ENCODE measurements at regions of chr3 and their contacts with region 1.

Region 1: DNA sequence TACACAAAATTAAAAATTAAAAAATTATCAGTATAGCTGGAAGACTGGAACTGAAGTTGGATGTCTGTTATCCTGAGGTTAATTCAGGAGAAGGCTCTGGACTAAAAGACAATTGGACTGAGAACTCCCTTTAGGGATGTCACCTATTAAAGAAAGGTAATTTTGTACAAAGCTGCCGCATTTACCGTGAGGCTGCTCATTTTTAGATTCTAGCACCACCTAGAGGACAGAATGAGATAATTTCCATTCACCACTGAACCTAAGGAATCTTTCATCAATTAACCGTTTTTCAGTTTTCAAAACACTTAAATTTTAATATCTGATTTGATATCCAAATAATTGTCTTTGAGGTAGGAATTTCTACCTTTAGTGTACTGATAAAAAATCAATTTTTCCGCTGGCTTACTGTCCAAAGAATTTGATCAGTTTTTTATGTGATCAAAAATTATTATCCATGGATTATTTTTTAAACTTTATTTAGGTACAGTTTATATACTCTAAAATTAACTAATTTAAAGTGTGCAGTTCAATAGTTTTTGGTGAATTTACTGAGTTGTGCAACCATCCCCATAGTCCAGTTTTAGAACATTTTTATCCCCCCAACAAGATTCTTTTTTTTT is 106.7 kb upstream of the TNIK start:
- DNase-seq: peak in 4 of 5 donors; percentile 52 to 63 (median 59)
- H3K4me3 ChIP-seq: no peak overlapping the region
- H3K4me3 Mint-ChIP-seq: no peak overlapping the region
- H3K27ac ChIP-seq: no peak overlapping the region
- H3K27ac Mint-ChIP-seq: no peak overlapping the region
- H3K4me1 ChIP-seq: peaks cover 10% of the 10 kb centered on the region
- H3K4me1 Mint-ChIP-seq: peaks cover 3 to 7% (median 5%) of the 10 kb centered on the region in 4 donors
- H3K27me3 ChIP-seq: no peaks in the 10 kb centered on the region
- H3K27me3 Mint-ChIP-seq: peaks cover 2 to 3% of the 10 kb centered on the region in 2 donors

Region 2: GRCh38 chr3:171049861-171050444 is 517.0 kb before region 1 on chr3:
- CTCF ChIA-PET with region 1: interaction called, 12 read pairs
- POLR2A ChIA-PET with region 1: no interaction called
- intact Hi-C with region 1: loop called (anchors 1 kb)
- DNase-seq: peak in 4 of 5 donors; percentile 17 to 37 (median 23)
- H3K4me3 ChIP-seq: no peak overlapping the region
- H3K4me3 Mint-ChIP-seq: no peak overlapping the region
- H3K27ac ChIP-seq: no peak overlapping the region
- H3K27ac Mint-ChIP-seq: no peak overlapping the region
- H3K4me1 ChIP-seq: no peaks in the 10 kb centered on the region
- H3K4me1 Mint-ChIP-seq: peaks cover 0 to 4% (median 1%) of the 10 kb centered on the region in 4 donors
- H3K27me3 ChIP-seq: no peaks in the 10 kb centered on the region
- H3K27me3 Mint-ChIP-seq: peaks cover 6 to 7% of the 10 kb centered on the region in 2 donors

Region 3: DNA sequence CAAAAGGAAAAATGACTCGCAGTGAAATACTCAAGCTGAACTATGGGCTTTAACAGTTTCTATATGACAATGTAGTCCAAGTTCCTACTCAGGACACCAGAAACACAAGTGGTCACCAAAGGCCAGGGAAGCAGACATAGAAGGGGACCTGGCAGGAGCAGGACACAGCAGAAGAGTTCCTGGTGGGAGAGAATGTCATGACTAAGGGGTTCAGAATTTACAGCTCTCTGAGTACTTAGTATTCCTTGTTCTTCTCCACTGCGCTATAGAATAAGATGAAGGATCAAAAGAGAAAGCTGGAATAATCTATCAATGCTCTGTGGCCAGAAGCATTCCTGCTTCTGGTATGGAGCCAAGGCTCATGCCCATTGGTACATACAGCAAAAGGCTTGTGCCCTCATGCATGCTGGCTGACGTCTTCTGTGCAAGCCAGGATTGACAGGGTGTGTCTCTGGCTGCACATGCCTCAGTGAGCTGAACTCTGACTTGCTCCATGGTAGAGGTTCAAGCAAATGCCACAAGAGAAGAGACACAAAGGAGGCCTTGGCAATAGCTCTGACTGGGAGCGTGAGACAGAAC is 411.7 kb before region 1 on chr3:
- CTCF ChIA-PET with region 1: interaction called, 11 read pairs
- POLR2A ChIA-PET with region 1: no interaction called
- intact Hi-C with region 1: no loop called
- DNase-seq: no peak
- H3K4me3 ChIP-seq: no peak overlapping the region
- H3K4me3 Mint-ChIP-seq: no peak overlapping the region
- H3K27ac ChIP-seq: no peak overlapping the region
- H3K27ac Mint-ChIP-seq: peak overlapping the region in 1 of 7 donors; percentile 38
- H3K4me1 ChIP-seq: no peaks in the 10 kb centered on the region
- H3K4me1 Mint-ChIP-seq: peaks cover 0 to 6% (median 3%) of the 10 kb centered on the region in 4 donors
- H3K27me3 ChIP-seq: no peaks in the 10 kb centered on the region
- H3K27me3 Mint-ChIP-seq: no peaks in the 10 kb centered on the region

Region 4: DNA sequence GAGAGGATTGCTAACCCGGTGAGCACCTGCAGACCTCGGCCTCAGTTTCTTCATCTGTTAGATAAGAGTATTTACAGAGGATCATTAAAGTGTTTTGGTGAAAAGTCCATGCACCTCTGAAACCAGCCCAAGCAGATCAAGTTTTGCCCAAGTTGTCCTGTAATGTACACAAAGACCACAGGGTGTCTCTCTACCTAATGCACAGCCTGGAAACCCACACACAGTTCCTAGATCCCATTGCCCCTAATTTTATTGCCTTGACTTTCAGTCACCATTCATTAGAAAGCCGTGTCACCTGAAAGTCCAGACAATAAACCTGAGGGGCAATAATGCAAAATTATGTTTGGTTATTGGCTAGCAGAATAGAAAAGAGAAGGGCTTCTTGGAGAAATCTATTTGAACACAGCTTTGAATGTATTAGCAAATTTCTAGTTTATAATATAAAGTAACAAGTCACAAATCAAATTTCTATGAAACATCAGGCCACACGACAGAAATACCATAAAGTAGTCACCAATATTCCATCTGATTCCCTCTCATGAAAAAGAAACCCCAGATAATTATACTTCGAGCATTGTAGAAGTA is 379.1 kb before region 1 on chr3:
- CTCF ChIA-PET with region 1: interaction called, 74 read pairs
- POLR2A ChIA-PET with region 1: no interaction called
- intact Hi-C with region 1: loop called (anchors 1 kb)
- DNase-seq: peak; percentile 25 to 37 (median 31)
- H3K4me3 ChIP-seq: no peak overlapping the region
- H3K4me3 Mint-ChIP-seq: no peak overlapping the region
- H3K27ac ChIP-seq: no peak overlapping the region
- H3K27ac Mint-ChIP-seq: no peak overlapping the region
- H3K4me1 ChIP-seq: peaks cover 21% of the 10 kb centered on the region
- H3K4me1 Mint-ChIP-seq: peaks cover 28 to 34% (median 31%) of the 10 kb centered on the region in 4 donors
- H3K27me3 ChIP-seq: no peaks in the 10 kb centered on the region
- H3K27me3 Mint-ChIP-seq: no peaks in the 10 kb centered on the region

Measured in CD4-positive, alpha-beta memory T cell (primary cell).